GM13977 (cell line): ENCODE measurements at regions of chr19 and their contacts with region 1.

Region 1: GRCh38 chr19:38899447-38900219 is at the starts of genes NFKBIB and SIRT2:
- DNase-seq: peak; percentile 99
- CTCF ChIP-seq: peak; percentile 4

Region 2: GRCh38 chr19:38729653-38730469 is 169.8 kb before region 1 on chr19:
- in situ Hi-C with region 1: loop called (anchors 25 kb)
- DNase-seq: peak; percentile 79
- CTCF ChIP-seq: peak; percentile 95

Region 3: GRCh38 chr19:38759590-38760003 is 140.0 kb before region 1 on chr19:
- in situ Hi-C with region 1: no loop called
- DNase-seq: no peak
- CTCF ChIP-seq: no peak